GM12878 (cell line): ENCODE measurements at regions of chr13 and their contacts with region 1.

Region 1: DNA sequence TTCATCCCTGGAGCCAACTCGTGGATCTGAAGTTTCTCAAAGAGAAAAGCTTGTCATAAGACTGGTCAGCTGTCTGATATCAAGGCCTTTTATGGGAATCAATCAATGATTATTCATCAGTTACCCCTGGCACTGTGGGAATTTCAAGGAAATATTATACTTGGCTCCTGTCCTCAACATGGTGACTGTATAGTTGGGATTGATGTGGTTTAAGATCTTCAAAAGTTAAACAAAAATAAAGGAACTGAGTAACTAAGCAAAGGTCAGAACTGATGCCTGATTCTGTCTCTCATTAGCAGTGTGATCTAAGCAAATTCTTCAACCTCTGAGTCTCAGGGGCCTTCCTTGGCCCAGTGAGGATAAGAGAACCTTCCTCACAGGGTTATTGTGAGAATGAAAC is 22.2 kb upstream of the SERPINE3 start:
- DNase-seq: no peak
- ATAC-seq: no peak
- H3K4me3 ChIP-seq: no peak overlapping the region
- H3K27ac ChIP-seq: no peak overlapping the region
- H3K4me1 ChIP-seq: no peaks in the 10 kb centered on the region
- H3K27me3 ChIP-seq: no peaks in the 10 kb centered on the region
- CTCF ChIP-seq: no peak
- EP300 ChIP-seq: no peak
- POLR2A ChIP-seq: no peak
- RAD21 ChIP-seq: no peak

Region 2: DNA sequence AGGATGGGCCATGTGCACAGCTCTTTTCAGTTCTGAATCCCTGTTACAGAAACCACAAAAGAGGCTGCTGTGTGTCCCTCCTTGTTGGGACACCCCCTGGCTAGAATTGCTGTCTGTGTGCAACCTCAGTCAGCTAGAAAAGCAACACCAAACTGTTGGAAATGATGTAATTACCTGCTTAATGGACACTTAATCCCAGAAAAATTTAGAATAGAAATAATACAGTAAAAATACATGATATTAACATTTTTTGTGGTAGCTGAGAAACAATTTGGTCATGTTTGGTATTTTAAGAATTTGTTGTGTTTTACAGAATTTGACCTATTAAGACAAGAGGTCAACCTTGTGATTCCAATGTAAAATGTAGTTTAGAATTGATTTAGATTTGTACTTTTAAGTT is 48.2 kb before region 1 on chr13:
- CTCF ChIA-PET with region 1: no interaction called
- POLR2A ChIA-PET with region 1: no interaction called
- RAD21 ChIA-PET with region 1: no interaction called
- SMC1A ChIA-PET with region 1: no interaction called
- in situ Hi-C with region 1: loop called (anchors 5 kb)
- intact Hi-C with region 1: no loop called
- DNase-seq: no peak
- ATAC-seq: no peak
- H3K4me3 ChIP-seq: no peak overlapping the region
- H3K27ac ChIP-seq: no peak overlapping the region
- H3K4me1 ChIP-seq: no peaks in the 10 kb centered on the region
- H3K27me3 ChIP-seq: peaks cover 0 to 8% of the 10 kb centered on the region in 2 experiments; a peak in 1 of 4 replicates
- CTCF ChIP-seq: no peak
- EP300 ChIP-seq: no peak
- POLR2A ChIP-seq: no peak
- RAD21 ChIP-seq: no peak